GM10248 (cell line): ENCODE measurements at regions of chr22 and their contacts with region 1.

Region 1: DNA sequence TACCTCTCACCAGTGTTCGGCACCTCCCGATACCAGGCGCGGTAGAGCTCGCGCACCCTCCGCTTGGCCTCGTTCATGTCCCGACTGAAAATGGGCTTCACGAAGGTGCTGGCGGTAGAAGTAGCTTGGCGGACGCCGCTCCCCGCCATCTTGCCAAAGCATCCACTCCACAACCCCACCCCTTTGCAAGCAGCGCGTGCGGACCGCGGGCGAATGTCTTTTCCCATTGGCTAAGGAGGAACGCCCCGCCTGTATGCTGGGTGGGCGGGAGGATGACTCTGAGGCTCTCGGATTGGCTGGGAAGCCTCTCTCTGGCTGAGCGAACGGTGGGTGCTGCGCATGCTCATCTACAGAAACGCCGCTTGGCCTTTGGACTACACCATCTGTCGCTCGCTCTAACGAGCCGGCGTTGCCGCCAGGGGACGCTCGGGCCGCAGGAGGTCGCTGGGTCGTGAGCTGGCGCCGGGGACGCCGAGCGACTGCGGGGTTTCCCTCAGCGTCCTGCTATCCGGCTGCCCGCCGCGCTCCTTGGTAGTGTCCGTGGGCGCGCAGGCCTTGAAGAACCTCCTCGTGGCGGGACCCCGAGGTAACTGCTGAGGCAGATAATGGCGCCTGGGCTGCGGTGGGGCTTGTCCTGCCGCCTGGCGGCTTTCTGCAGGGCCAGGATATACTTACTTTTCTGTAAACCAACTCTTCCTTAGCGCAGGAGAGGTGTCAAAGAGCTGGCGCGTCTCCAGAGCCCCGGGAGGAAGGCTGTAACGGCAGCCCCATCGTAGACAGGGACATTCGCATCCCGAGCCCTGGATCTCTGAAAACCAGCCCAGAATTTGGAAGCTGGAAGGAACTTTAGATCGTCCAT is at the start of gene NDUFA6:
- DNase-seq: peak; percentile 99
- CTCF ChIP-seq: peak; percentile 87

Region 2: DNA sequence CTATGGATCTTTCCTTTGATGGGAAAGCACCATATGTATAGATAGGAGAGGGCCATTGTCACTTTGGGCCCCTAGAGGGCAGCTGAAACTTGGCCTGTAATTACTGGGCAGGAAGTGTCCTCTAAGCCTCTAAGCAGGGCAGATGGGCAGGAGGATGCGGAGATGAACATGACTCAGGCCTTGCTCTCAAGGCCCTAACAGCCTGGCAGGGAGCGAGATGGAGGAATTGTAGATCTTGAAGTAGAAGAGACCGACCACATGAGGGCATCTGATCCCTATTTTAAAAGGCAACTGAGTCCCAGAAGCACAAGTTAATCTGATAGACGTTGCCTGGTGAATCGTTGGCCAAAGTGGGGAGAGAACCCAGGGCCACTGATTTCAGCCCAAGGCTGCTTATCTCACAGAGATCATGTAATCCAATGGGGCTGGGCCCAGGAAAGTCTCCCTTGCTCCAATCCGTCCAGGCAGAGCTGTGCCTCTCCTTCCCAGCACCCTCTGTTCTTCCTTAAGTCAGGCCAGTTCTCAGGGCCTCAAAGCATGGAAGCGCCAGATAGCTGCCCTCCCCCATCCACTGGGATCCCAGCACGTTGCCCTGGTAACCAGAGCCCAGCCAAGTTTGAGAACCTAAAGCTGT is 124.1 kb before region 1 on chr22:
- CTCF ChIA-PET with region 1: interaction called, 17 read pairs
- POLR2A ChIA-PET with region 1: no interaction called
- DNase-seq: peak; percentile 63
- CTCF ChIP-seq: peak; percentile 34

Region 3: DNA sequence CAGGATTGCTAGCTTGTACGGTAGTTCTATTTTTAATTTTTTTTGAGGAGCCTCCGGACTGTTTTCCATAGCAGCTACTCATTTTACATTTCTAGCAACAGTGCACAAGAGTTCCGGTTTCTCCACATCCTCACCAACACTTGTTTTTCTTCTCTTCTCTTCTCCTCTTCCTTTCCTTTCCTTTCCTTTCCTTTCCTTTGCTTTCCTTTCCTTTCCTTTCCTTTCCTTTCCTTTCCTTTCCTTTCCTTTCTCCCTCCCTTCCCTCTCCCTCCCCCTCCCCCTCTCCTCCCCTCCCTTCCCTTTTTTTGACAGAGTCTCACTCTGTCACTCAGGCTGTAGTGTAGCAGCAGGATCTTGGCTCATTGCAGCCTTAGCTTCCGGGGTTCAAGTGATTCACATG is 82.9 kb before region 1 on chr22:
- CTCF ChIA-PET with region 1: no interaction called
- POLR2A ChIA-PET with region 1: no interaction called
- DNase-seq: no peak
- CTCF ChIP-seq: no peak

Region 4: GRCh38 chr22:42079319-42080251 is 11.2 kb before region 1 on chr22 and contains the start of gene SMDT1:
- CTCF ChIA-PET with region 1: interaction called, 14 read pairs
- POLR2A ChIA-PET with region 1: interaction called, 7 read pairs
- DNase-seq: peak; percentile 98
- CTCF ChIP-seq: no peak

Region 5: DNA sequence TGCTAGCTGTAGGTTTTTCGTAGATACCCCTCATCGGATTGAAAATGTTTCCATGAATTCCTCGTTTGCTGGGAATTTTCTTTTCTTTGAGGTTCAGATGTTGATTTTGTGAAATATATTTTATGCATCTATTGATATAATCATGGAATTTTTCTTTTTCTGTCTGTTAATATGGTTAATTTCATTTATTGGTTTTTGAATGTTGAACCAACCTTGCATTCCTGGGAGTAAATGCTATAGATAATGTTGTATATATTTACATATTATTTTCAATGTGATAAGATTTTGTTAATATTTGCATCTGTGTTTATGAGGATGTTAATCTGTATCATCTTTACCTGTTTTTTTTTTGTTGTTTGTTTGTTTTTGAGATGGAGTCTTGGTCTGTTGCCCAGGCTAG is 10.4 kb after region 1 on chr22:
- CTCF ChIA-PET with region 1: interaction called, 13 read pairs
- POLR2A ChIA-PET with region 1: no interaction called
- DNase-seq: no peak
- CTCF ChIP-seq: no peak

Region 6: DNA sequence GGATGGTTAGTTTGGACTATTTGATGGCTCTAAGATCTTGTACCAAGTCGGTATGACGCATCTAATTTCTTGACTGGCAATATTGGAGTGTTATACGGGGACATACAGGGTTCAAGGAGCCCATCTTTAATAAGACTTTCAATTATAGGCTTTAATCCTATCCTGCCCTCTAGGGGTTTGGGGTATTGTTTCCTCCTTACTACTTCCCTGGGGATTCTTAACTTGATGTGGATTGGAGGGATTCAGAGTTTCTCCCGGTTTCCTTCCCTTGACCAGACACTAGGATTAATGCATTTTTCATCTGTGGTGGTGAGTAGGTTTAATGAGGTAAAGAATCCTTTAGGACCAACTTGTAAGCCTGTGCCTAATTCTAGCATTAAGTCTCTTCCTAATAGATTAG is 21.0 kb after region 1 on chr22:
- CTCF ChIA-PET with region 1: interaction called, 18 read pairs
- POLR2A ChIA-PET with region 1: no interaction called
- DNase-seq: no peak
- CTCF ChIP-seq: no peak

Region 7: GRCh38 chr22:42444077-42444904 is 353.5 kb after region 1 on chr22:
- CTCF ChIA-PET with region 1: interaction called, 26 read pairs
- POLR2A ChIA-PET with region 1: no interaction called
- DNase-seq: peak; percentile 80
- CTCF ChIP-seq: peak; percentile 63

Region 8: DNA sequence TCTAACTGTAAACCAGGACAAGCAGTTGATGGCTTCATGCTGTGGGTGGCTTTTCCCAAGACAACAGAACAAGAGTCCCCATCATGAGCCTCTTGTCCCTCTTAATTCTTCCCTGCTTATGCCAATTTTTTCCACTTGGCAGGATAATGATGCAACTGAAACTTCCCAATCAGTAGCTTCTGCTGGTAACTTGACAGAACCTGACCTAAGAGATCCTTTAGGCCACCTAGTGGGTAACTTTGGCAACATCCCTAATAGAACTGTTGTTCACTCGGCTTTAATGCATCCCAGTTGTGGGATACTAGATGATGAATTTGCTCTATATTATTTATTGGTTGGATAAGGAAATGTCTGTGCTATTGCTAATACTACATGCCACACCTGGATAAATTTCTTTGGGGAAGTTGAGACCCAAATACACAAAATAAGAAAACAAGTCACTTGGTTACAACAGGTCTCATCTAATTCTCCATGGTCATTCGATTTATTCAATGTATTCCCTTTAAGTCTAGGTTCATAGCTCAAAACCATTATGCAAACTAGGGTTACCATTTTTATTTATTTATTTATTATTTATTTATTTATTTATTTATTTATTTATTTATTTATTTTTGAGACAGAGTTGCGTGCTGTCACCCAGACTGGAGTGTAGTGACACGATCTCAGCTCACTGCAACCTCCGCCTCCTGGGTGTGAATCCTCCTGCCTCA is 382.8 kb after region 1 on chr22:
- CTCF ChIA-PET with region 1: interaction called, 16 read pairs
- POLR2A ChIA-PET with region 1: no interaction called
- DNase-seq: peak; percentile 44
- CTCF ChIP-seq: peak; percentile 54